ENCODE measurements at regions of chr16 and their contacts with region 1.

Region 1: GRCh38 chr16:50210266-50211038 is 55.9 kb upstream of the ADCY7 start:
- DNase-seq: peak; percentile 79
- H3K4me3 Mint-ChIP-seq: no peak overlapping the region
- H3K27ac Mint-ChIP-seq: peak overlapping the region; percentile 7
- H3K4me1 Mint-ChIP-seq: peaks cover 28% of the 10 kb centered on the region
- H3K27me3 Mint-ChIP-seq: no peaks in the 10 kb centered on the region
- CTCF ChIP-seq: peak; percentile 74

Region 2: GRCh38 chr16:50024684-50025536 is 185.5 kb before region 1 on chr16 and contains the start of gene CNEP1R1:
- CTCF ChIA-PET with region 1: interaction called, 80 read pairs
- intact Hi-C with region 1: loop called (anchors 1 kb)
- DNase-seq: peak; percentile 97
- H3K4me3 Mint-ChIP-seq: peak within 1 kb of the TSS; percentile 89
- H3K27ac Mint-ChIP-seq: peak within 1 kb of the TSS; percentile 86
- H3K4me1 Mint-ChIP-seq: no peaks in the 10 kb centered on the region
- H3K27me3 Mint-ChIP-seq: peaks cover 27% of the 10 kb centered on the region
- CTCF ChIP-seq: peak; percentile 99
- total RNA-seq, gene CNEP1R1: 21.8 and 23.2 TPM in 2 replicates

Region 3: GRCh38 chr16:50065624-50066481 is 144.6 kb before region 1 on chr16 and contains the start of gene HEATR3:
- CTCF ChIA-PET with region 1: interaction called, 11 read pairs
- intact Hi-C with region 1: loop called (anchors 5 kb)
- DNase-seq: peak; percentile 97
- H3K4me3 Mint-ChIP-seq: peak within 1 kb of the TSS; percentile 75
- H3K27ac Mint-ChIP-seq: peak within 1 kb of the TSS; percentile 42
- H3K4me1 Mint-ChIP-seq: peaks cover 25% of the 10 kb centered on the region
- H3K27me3 Mint-ChIP-seq: no peaks in the 10 kb centered on the region
- CTCF ChIP-seq: no peak
- total RNA-seq, gene HEATR3: 27.3 and 28.3 TPM in 2 replicates

Region 4: DNA sequence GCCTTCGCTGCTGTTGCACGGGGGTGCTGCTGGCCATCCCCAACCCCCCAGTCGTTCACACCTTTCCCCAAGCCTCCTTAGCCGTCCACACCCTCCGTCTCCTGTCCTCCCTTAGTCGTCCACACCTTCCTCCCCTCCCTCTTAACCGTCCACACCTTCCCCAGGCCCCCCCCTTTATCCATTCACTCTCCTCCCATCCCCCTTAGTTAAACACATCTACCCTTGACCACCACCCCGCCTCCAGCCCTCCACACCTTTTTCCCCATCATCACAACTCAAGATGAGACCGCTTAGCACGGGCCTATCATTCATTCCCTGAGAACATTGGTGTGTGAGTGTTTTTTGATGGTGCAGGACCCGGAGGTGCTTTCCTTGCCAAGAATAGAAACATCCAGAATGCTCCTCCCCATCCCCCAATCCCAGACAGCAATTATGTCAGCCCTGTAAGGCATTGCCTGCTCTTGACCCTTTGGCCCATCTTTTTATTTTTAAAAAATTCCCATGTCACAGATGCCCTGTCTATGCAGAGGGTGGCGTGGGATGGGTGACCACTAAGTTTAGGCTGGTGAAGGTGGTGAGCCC is 56.0 kb before region 1 on chr16:
- CTCF ChIA-PET with region 1: interaction called, 10 read pairs
- intact Hi-C with region 1: no loop called
- DNase-seq: no peak
- H3K4me3 Mint-ChIP-seq: peak overlapping the region; percentile 80
- H3K27ac Mint-ChIP-seq: peak overlapping the region; percentile 42
- H3K4me1 Mint-ChIP-seq: peaks cover 43% of the 10 kb centered on the region
- H3K27me3 Mint-ChIP-seq: no peaks in the 10 kb centered on the region
- CTCF ChIP-seq: no peak

Region 5: GRCh38 chr16:50185005-50185505 is 25.4 kb before region 1 on chr16:
- CTCF ChIA-PET with region 1: interaction called, 15 read pairs
- intact Hi-C with region 1: no loop called
- DNase-seq: peak; percentile 49
- H3K4me3 Mint-ChIP-seq: peak overlapping the region; percentile 71
- H3K27ac Mint-ChIP-seq: peak overlapping the region; percentile 59
- H3K4me1 Mint-ChIP-seq: peaks cover 43% of the 10 kb centered on the region
- H3K27me3 Mint-ChIP-seq: no peaks in the 10 kb centered on the region
- CTCF ChIP-seq: no peak

Region 6: GRCh38 chr16:50313596-50314478 is 103.4 kb after region 1 on chr16:
- CTCF ChIA-PET with region 1: no interaction called
- intact Hi-C with region 1: loop called (anchors 10 kb)
- DNase-seq: no peak
- H3K4me3 Mint-ChIP-seq: no peak overlapping the region
- H3K27ac Mint-ChIP-seq: no peak overlapping the region
- H3K4me1 Mint-ChIP-seq: no peaks in the 10 kb centered on the region
- H3K27me3 Mint-ChIP-seq: no peaks in the 10 kb centered on the region
- CTCF ChIP-seq: no peak

Region 7: GRCh38 chr16:50354629-50355456 is 144.4 kb after region 1 on chr16:
- CTCF ChIA-PET with region 1: interaction called, 8 read pairs
- intact Hi-C with region 1: loop called (anchors 1 kb)
- DNase-seq: no peak
- H3K4me3 Mint-ChIP-seq: no peak overlapping the region
- H3K27ac Mint-ChIP-seq: no peak overlapping the region
- H3K4me1 Mint-ChIP-seq: peaks cover 10% of the 10 kb centered on the region
- H3K27me3 Mint-ChIP-seq: no peaks in the 10 kb centered on the region
- CTCF ChIP-seq: peak; percentile 63

Region 8: GRCh38 chr16:50741808-50742575 is 531.5 kb after region 1 on chr16 and contains the start of gene CYLD:
- CTCF ChIA-PET with region 1: no interaction called
- intact Hi-C with region 1: no loop called
- DNase-seq: peak; percentile 99
- H3K4me3 Mint-ChIP-seq: peak within 1 kb of the TSS; percentile 78
- H3K27ac Mint-ChIP-seq: peak within 1 kb of the TSS; percentile 87
- H3K4me1 Mint-ChIP-seq: peaks cover 25% of the 10 kb centered on the region
- H3K27me3 Mint-ChIP-seq: peaks cover 29% of the 10 kb centered on the region
- CTCF ChIP-seq: no peak
- total RNA-seq, gene CYLD: 29.2 and 31.8 TPM in 2 replicates